B cell (primary cell): ENCODE measurements at regions of chrX and their contacts with region 1.

Region 1: DNA sequence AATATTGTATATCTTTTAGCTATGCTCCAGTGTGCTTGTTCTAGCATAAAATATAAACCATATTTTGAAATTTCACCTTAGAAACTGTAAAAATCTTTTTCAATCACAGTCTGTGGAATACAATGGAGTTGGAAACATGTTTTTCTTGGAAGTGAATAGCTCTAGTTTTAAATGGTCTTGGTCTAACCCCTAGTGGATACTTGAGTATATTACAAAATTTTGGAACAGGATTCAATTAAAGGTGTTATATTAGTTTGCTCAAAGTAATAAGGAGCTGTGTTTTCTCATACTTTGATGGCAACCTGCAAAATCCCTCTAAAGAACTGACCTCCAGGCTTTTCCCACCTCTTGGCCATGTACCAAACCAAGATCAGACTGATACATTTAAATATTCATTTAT is 48.2 kb downstream of the STK26 start:
- DNase-seq: peak; percentile 3
- ATAC-seq: no peak
- H3K4me3 ChIP-seq: no peak overlapping the region
- H3K4me3 Mint-ChIP-seq: no peak overlapping the region
- H3K27ac ChIP-seq: no peak overlapping the region
- H3K27ac Mint-ChIP-seq: no peak overlapping the region
- H3K4me1 ChIP-seq: no peaks in the 10 kb centered on the region
- H3K4me1 Mint-ChIP-seq: no peaks in the 10 kb centered on the region
- H3K27me3 ChIP-seq: no peaks in the 10 kb centered on the region
- H3K27me3 Mint-ChIP-seq: no peaks in the 10 kb centered on the region
- CTCF ChIP-seq: peak; percentile 30

Region 2: DNA sequence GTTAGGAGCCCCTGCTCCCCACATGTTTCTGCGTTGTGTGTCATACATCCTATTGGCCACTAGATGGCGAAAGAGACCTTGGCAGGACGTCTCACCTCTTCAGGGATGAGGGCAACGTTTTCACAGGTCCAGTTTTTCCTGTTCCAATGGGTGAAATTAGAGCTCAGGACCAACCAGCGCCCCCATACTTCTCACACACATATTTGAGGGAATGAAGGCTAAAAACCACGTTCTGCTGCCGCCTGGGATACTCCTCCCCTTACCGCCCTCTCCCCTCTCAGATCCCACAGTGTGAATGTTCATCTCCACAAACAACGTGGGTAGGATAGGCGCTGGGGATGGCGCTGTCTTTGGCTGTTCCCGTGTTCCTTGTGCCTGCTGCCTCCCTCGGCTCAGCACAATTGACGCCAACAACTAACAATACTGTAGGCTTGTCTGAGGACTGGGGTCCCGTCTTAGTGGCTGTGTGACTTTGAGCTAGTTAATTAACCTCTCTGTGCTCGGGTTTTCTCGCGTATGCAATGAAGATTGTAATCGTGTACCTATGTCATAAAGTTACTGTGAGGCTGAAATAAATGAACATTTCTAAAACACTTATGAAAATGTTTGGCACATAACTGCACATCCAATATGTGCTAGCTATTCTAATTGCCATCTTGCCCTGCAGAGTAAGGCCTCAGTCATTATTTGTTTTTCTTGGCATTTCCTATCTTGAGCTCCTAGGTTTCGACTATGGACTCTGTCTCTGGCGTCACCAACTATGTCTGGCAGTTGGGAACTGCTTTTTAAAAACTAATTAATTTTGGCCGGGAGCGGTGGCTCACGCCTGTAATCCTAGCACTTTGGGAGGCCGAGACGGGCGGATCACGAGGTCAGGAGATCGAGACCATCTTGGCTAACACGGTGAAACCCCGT is 229.5 kb before region 1 on chrX:
- CTCF ChIA-PET with region 1: interaction called, 29 read pairs
- POLR2A ChIA-PET with region 1: no interaction called
- intact Hi-C with region 1: no loop called
- DNase-seq: peak; percentile 66
- ATAC-seq: peak; percentile 67
- H3K4me3 ChIP-seq: no peak overlapping the region
- H3K4me3 Mint-ChIP-seq: no peak overlapping the region
- H3K27ac ChIP-seq: no peak overlapping the region
- H3K27ac Mint-ChIP-seq: no peak overlapping the region
- H3K4me1 ChIP-seq: peaks cover 6 to 7% of the 10 kb centered on the region in 2 donors
- H3K4me1 Mint-ChIP-seq: peaks cover 3% of the 10 kb centered on the region
- H3K27me3 ChIP-seq: no peaks in the 10 kb centered on the region
- H3K27me3 Mint-ChIP-seq: no peaks in the 10 kb centered on the region
- CTCF ChIP-seq: peak; percentile 73

Region 3: DNA sequence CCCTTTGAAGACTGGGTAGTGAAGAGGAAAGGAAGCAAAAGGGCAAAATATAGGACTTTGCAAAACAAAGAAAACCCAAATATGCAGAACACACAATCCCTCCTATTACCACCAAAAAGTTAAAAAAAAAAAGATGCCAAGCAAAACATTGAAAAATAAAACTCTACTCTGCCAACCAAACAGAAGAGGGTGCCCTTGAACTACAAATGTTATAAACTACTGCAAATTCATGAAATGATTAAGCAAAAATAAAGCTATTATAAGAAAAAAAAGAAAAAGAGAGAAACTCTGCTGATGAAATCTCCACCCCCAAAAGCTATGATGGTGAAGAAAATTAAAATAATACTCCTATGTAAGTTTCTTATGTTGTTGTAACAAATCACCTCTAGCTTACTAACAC is 216.7 kb before region 1 on chrX:
- CTCF ChIA-PET with region 1: interaction called, 17 read pairs
- POLR2A ChIA-PET with region 1: no interaction called
- intact Hi-C with region 1: loop called (anchors 1 kb)
- DNase-seq: peak; percentile 31
- ATAC-seq: no peak
- H3K4me3 ChIP-seq: no peak overlapping the region
- H3K4me3 Mint-ChIP-seq: no peak overlapping the region
- H3K27ac ChIP-seq: no peak overlapping the region
- H3K27ac Mint-ChIP-seq: no peak overlapping the region
- H3K4me1 ChIP-seq: no peaks in the 10 kb centered on the region
- H3K4me1 Mint-ChIP-seq: no peaks in the 10 kb centered on the region
- H3K27me3 ChIP-seq: peaks cover 0 to 2% (median 0%) of the 10 kb centered on the region in 4 experiments
- H3K27me3 Mint-ChIP-seq: no peaks in the 10 kb centered on the region
- CTCF ChIP-seq: peak; percentile 34

Region 4: GRCh38 chrX:132171478-132172260 is 100.4 kb after region 1 on chrX:
- CTCF ChIA-PET with region 1: no interaction called
- POLR2A ChIA-PET with region 1: no interaction called
- intact Hi-C with region 1: no loop called
- DNase-seq: no peak
- ATAC-seq: no peak
- H3K4me3 ChIP-seq: no peak overlapping the region
- H3K4me3 Mint-ChIP-seq: no peak overlapping the region
- H3K27ac ChIP-seq: no peak overlapping the region
- H3K27ac Mint-ChIP-seq: no peak overlapping the region
- H3K4me1 ChIP-seq: no peaks in the 10 kb centered on the region
- H3K4me1 Mint-ChIP-seq: no peaks in the 10 kb centered on the region
- H3K27me3 ChIP-seq: no peaks in the 10 kb centered on the region
- H3K27me3 Mint-ChIP-seq: peaks cover 3% of the 10 kb centered on the region
- CTCF ChIP-seq: no peak